Activated CD8-positive, alpha-beta T cell treated with anti-CD3 and anti-CD28 coated beads, Interleukin-2, amount 10 ng/mL, durations not matched to agents 7 days and 5 days (primary cell): ENCODE measurements at regions of chr12 and their contacts with region 1.

Region 1: DNA sequence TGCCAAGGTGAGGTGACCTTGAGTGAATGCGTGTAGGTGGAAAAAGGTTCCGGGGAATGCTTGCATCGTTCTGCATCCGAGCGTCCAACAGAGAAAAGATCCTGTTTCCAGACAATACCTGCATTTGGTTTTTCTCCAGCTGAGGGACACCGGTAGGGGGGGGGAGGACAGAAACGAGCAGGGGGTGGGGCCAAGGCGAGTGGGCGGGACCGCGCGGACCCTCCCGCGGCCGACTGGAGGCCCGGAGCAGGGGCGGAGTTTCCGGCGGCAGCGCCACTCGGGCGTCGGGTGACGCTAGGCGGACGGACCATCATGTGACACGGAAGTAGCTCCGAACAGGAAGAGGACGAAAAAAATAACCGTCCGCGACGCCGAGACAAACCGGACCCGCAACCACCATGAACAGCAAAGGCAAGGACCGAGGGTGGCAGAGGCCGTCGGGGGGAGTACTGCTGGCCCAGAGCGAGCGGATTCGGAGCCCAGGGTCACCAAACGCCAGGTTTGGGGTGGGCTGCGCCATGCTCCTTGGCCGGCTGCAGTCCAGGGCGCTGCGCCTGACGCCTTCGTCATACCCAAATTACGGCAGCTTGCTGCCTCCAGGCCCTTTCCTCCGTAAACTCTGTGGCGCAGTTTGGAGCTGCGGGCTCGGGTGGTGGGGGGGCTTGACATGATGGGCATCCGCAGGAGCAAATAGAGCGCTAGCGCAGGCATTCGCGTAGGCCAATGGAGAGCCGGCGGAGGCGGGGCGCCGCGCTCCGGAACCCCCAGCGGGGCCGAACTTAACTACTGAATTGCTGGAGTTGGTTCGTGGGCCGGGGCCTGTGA is at the start of gene DAZAP2:
- DNase-seq: peak; percentile 97
- ATAC-seq: peak; percentile 96
- H3K4me3 Mint-ChIP-seq: peak within 1 kb of the TSS; percentile 96
- H3K27ac Mint-ChIP-seq: peak within 1 kb of the TSS; percentile 100
- H3K4me1 Mint-ChIP-seq: peaks cover 38% of the 10 kb centered on the region
- H3K27me3 Mint-ChIP-seq: peaks cover 2% of the 10 kb centered on the region
- total RNA-seq, gene DAZAP2: 186 TPM

Region 2: GRCh38 chr12:51083126-51083833 is 155.4 kb before region 1 on chr12 and contains the start of gene CSRNP2:
- CTCF ChIA-PET with region 1: interaction called, 3 read pairs
- POLR2A ChIA-PET with region 1: interaction called, 14 read pairs
- DNase-seq: peak; percentile 97
- ATAC-seq: peak; percentile 99
- H3K4me3 Mint-ChIP-seq: peak within 1 kb of the TSS; percentile 92
- H3K27ac Mint-ChIP-seq: peak within 1 kb of the TSS; percentile 82
- H3K4me1 Mint-ChIP-seq: peaks cover 25% of the 10 kb centered on the region
- H3K27me3 Mint-ChIP-seq: no peaks in the 10 kb centered on the region
- total RNA-seq, gene CSRNP2: 13.4 to 13.7 TPM

Region 3: GRCh38 chr12:51217968-51218606 is 20.6 kb before region 1 on chr12 and contains the start of gene POU6F1:
- CTCF ChIA-PET with region 1: interaction called, 17 read pairs
- POLR2A ChIA-PET with region 1: interaction called, 31 read pairs
- DNase-seq: peak; percentile 73
- ATAC-seq: peak; percentile 89
- H3K4me3 Mint-ChIP-seq: peak within 1 kb of the TSS; percentile 85
- H3K27ac Mint-ChIP-seq: peak within 1 kb of the TSS; percentile 84
- H3K4me1 Mint-ChIP-seq: peaks cover 11% of the 10 kb centered on the region
- H3K27me3 Mint-ChIP-seq: no peaks in the 10 kb centered on the region
- total RNA-seq, gene POU6F1: 1.3 to 2.2 TPM

Region 4: GRCh38 chr12:51254592-51254991 is 15.9 kb after region 1 on chr12:
- CTCF ChIA-PET with region 1: interaction called, 28 read pairs
- POLR2A ChIA-PET with region 1: interaction called, 29 read pairs
- DNase-seq: no peak
- ATAC-seq: no peak
- H3K4me3 Mint-ChIP-seq: no peak overlapping the region
- H3K27ac Mint-ChIP-seq: peak overlapping the region; percentile 33
- H3K4me1 Mint-ChIP-seq: peaks cover 11% of the 10 kb centered on the region
- H3K27me3 Mint-ChIP-seq: no peaks in the 10 kb centered on the region

Region 5: DNA sequence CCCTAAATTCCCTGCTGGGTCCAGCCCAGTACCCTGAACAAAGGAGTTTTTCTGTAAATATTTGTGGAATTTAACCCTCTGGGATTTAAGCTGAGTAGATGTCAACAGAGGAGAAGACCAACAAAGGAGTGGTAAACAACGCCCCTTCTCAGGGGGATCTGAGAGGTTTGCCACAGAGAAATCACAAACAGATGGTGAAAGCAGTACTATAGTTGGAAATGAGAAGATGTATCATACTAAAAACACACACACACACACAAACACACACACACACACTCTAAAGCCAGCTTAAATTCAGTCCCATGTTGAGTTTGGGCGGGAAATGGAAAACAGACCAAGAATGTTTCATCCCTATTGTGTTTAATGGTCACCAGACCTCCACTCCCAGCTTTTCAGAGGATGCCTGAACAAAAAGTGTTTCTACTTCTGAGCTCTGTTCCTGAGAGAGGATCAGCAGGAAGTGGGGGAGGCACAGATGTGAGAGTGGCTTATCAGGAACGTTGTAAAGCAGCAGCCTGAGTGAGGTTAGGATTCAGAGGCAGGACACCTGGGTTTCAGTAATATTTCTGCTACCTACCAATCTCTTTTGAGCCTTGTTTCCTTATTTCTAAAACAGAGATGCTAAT is 82.1 kb after region 1 on chr12:
- CTCF ChIA-PET with region 1: no interaction called
- POLR2A ChIA-PET with region 1: interaction called, 13 read pairs
- DNase-seq: no peak
- ATAC-seq: no peak
- H3K4me3 Mint-ChIP-seq: peak overlapping the region; percentile 99
- H3K27ac Mint-ChIP-seq: peak overlapping the region; percentile 70
- H3K4me1 Mint-ChIP-seq: peaks cover 71% of the 10 kb centered on the region
- H3K27me3 Mint-ChIP-seq: no peaks in the 10 kb centered on the region

Region 6: DNA sequence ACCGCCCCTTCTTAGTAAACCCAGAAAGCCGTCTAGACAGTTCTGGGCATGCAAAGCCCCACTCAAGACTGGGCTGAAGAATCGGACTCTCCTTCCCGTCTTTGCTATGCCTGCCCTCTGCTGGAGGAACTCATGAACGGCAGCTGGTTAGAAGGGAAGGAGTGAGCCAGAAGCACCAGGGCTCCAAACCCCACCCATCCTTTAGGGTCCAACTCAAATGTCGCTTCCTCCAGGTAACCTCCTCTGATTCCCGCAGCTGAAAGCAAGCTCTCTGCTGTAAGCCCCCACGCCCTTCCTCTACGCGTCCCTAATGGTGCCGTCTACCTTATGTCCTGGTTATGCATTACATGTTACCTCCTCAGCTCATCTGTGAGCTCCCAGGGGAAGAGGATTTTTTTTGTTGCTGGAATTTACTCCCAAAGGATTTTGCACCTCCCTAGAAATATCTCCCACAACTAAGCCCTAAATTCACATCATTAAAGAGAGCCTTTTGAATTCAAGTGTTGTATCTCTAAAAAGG is 293.3 kb after region 1 on chr12:
- CTCF ChIA-PET with region 1: no interaction called
- POLR2A ChIA-PET with region 1: no interaction called
- DNase-seq: peak; percentile 86
- ATAC-seq: peak; percentile 97
- H3K4me3 Mint-ChIP-seq: no peak overlapping the region
- H3K27ac Mint-ChIP-seq: no peak overlapping the region
- H3K4me1 Mint-ChIP-seq: peaks cover 11% of the 10 kb centered on the region
- H3K27me3 Mint-ChIP-seq: peaks cover 23% of the 10 kb centered on the region